ENCODE measurements at regions of chr11 and their contacts with region 1.

Region 1: DNA sequence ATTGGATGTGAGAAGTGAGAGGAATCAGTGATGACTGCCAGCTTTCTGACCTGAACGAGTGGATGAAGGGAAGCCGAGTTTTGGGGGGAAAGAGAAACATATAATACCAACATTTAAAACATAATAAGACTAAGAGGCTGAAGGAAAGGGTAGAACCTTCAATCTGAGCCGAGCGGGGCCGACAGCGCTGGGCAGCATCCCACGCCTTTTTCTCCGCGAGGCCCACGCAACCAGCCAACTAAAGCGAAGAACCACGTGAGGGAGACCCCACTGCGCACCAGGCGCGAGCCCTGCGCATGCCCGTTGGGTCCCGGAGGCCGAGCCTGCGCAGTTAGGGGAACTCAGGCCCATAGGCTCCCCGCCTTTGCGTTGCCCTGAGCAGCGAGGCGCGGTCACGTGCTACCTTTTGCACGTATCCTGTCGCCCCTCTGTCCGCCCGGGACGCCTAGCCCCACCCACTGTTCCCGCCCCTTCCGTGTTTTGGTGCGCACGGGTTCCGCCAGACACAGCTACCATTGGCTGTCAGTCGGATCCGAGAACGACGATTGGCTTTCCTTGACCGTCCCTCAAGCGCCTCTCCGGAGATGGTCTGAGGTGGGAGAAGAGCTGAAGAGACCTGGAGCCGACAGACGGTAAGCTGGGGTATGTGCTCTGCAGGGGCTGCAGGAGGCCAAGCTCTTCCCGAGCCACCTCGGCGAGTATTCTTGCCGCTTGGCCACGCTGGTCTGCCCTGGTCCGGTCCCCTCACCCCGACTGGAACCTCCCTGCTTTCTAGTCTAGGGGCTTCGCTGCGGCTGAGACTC is at the start of gene HINFP:
- H3K4me3 ChIP-seq: peak within 1 kb of the TSS; percentile 62
- H3K27ac ChIP-seq: peak within 1 kb of the TSS; percentile 21; the same call in 1 of the 2 replicates
- H3K4me1 ChIP-seq: peaks cover 4% of the 10 kb centered on the region; the same call in 1 of the 2 replicates
- CTCF ChIP-seq: no peak

Region 2: GRCh38 chr11:118979434-118979833 is 141.8 kb before region 1 on chr11:
- CTCF ChIA-PET with region 1: no interaction called
- POLR2A ChIA-PET with region 1: no interaction called
- H3K4me3 ChIP-seq: no peak overlapping the region
- H3K27ac ChIP-seq: no peak overlapping the region
- H3K4me1 ChIP-seq: no peaks in the 10 kb centered on the region
- CTCF ChIP-seq: 0 out of 2 replicates have a peak, but pooled peaks have one; percentile 13

Region 3: GRCh38 chr11:119095066-119095880 is 25.9 kb before region 1 on chr11:
- CTCF ChIA-PET with region 1: interaction called, 4 read pairs
- POLR2A ChIA-PET with region 1: interaction called, 27 read pairs
- H3K4me3 ChIP-seq: peak overlapping the region; percentile 98
- H3K27ac ChIP-seq: peak overlapping the region; percentile 82
- H3K4me1 ChIP-seq: no peaks in the 10 kb centered on the region
- CTCF ChIP-seq: peak; percentile 59

Region 4: GRCh38 chr11:119101759-119102423 is 19.3 kb before region 1 on chr11 and contains the start of gene DPAGT1:
- CTCF ChIA-PET with region 1: interaction called, 7 read pairs
- POLR2A ChIA-PET with region 1: interaction called, 51 read pairs
- H3K4me3 ChIP-seq: peak within 1 kb of the TSS; percentile 63
- H3K27ac ChIP-seq: peak within 1 kb of the TSS; percentile 53
- H3K4me1 ChIP-seq: no peaks in the 10 kb centered on the region
- CTCF ChIP-seq: no peak

Region 5: GRCh38 chr11:119134389-119134978 is 13.3 kb after region 1 on chr11:
- CTCF ChIA-PET with region 1: interaction called, 18 read pairs
- POLR2A ChIA-PET with region 1: interaction called, 4 read pairs
- H3K4me3 ChIP-seq: no peak overlapping the region
- H3K27ac ChIP-seq: no peak overlapping the region
- H3K4me1 ChIP-seq: no peaks in the 10 kb centered on the region
- CTCF ChIP-seq: no peak

Region 6: DNA sequence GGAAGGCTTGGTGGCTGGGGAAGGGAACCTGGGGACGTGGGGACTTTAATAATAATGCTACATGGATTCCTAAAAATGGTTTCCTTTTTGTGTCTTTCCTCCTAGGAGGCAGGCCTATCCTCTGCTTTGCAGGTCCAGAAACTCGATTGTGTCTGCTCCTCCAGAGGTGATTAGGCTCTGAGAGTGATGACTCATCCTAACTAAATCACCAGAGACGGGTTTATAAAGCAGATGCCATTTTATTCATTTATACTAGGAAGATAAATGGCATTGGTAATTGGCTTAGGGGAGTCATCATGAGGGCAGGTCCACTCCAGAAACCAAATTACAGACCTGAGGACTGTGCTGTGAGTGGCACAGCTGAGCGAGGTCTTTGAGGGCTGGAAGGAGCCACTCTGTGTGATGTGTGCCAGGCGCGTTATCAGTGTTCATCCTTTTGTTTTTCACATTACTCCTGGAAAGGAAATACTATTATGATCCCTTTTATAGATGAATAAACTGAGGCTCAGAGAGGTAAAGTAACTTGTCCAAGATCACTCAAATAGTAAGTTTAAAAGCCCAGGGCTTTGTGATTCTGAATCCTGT is 54.4 kb after region 1 on chr11:
- CTCF ChIA-PET with region 1: no interaction called
- POLR2A ChIA-PET with region 1: no interaction called
- H3K4me3 ChIP-seq: no peak overlapping the region
- H3K27ac ChIP-seq: no peak overlapping the region
- H3K4me1 ChIP-seq: no peaks in the 10 kb centered on the region
- CTCF ChIP-seq: no peak

Measured in HEK293 (cell line).